Psoas muscle (tissue), 8 donors: ENCODE measurements at regions of chr1 and their contacts with region 1.

Region 1: DNA sequence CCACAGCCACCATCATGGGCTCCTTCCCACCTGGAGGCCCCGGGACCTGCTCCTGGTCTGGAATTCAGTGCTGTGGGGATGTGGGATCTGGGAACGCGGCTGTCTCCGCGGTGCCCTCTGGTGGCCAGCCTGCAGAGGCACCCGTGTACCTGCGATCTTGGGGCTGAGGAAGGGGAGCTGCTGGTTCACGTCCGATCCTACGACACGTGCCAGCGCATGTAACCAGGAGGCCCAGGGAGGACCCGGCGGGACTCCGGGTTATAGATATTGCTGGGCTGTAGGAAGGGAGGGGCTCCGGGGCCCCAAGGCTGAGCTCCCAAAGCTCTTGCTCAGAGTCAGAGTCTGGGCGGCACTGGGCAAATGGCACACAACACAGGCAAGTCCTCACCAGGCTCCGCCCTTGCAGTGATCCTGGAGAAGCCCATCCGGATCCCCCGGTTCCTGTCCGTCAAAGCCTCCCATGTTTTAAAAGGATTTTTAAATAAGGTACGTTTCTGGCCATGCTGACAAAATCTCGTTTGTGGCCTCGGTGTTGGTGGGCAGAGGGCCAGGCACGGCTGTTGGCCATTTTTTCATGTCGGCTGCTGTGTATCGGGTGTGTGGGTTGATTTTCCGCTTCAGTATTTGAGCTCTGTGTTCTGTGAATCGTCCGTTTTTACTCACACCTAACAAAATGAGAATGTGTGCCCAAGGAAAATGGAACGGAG is 20.1 kb downstream of the FAAP20 start:
- DNase-seq: peak; percentile 55 to 77
- ATAC-seq: peak; percentile 76 to 94 (median 81)
- H3K4me3 ChIP-seq: peak overlapping the region; percentile 63
- H3K27ac ChIP-seq: no peak overlapping the region
- H3K4me1 ChIP-seq: no peaks in the 10 kb centered on the region
- H3K27me3 ChIP-seq: peaks cover 0 to 14% (median 0%) of the 10 kb centered on the region in 3 donors
- CTCF ChIP-seq: peak; percentile 82

Region 2: GRCh38 chr1:2104621-2105513 is 69.6 kb before region 1 on chr1:
- intact Hi-C with region 1: loop called in 1 of 2 experiments (anchors 5 kb)
- DNase-seq: peak in 1 of 2 donors; percentile 5
- ATAC-seq: no peak
- H3K4me3 ChIP-seq: no peak overlapping the region
- H3K27ac ChIP-seq: no peak overlapping the region
- H3K4me1 ChIP-seq: no peaks in the 10 kb centered on the region
- H3K27me3 ChIP-seq: peaks cover 0 to 30% (median 9%) of the 10 kb centered on the region in 3 donors
- CTCF ChIP-seq: no peak

Region 3: GRCh38 chr1:2133039-2133878 is 41.2 kb before region 1 on chr1:
- intact Hi-C with region 1: loop called in 1 of 2 experiments (anchors 2 kb)
- DNase-seq: peak; percentile 97 to 98
- ATAC-seq: peak; percentile 92 to 96 (median 92)
- H3K4me3 ChIP-seq: peak overlapping the region; percentile 60
- H3K27ac ChIP-seq: peak overlapping the region; percentile 60
- H3K4me1 ChIP-seq: peaks cover 6% of the 10 kb centered on the region
- H3K27me3 ChIP-seq: peaks cover 0 to 60% (median 36%) of the 10 kb centered on the region in 3 donors
- CTCF ChIP-seq: no peak

Region 4: GRCh38 chr1:2152954-2153353 is 21.5 kb before region 1 on chr1:
- intact Hi-C with region 1: no loop called
- DNase-seq: no peak
- ATAC-seq: no peak
- H3K4me3 ChIP-seq: no peak overlapping the region
- H3K27ac ChIP-seq: no peak overlapping the region
- H3K4me1 ChIP-seq: no peaks in the 10 kb centered on the region
- H3K27me3 ChIP-seq: peaks cover 0 to 15% (median 1%) of the 10 kb centered on the region in 3 donors
- CTCF ChIP-seq: no peak